ENCODE measurements at regions of chr5 and their contacts with region 1.

Region 1: GRCh38 chr5:95858661-95859326 is 36.3 kb upstream of the GLRX start:
- DNase-seq: peak; percentile 67
- ATAC-seq: peak; percentile 95
- H3K4me3 ChIP-seq: no peak overlapping the region; the same call in 1 of the 2 replicates
- H3K27ac ChIP-seq: no peak overlapping the region
- H3K4me1 ChIP-seq: peaks cover 21% of the 10 kb centered on the region
- H3K27me3 ChIP-seq: no peaks in the 10 kb centered on the region
- CTCF ChIP-seq: peak; percentile 96 to 99 (median 98)
- EP300 ChIP-seq: no peak
- POLR2A ChIP-seq: no peak
- RAD21 ChIP-seq: peak; percentile 99

Region 2: GRCh38 chr5:95883613-95884325 is 25.0 kb after region 1 on chr5:
- CTCF ChIA-PET with region 1: interaction called, 5 read pairs
- POLR2A ChIA-PET with region 1: interaction called, 3 read pairs
- RAD21 ChIA-PET with region 1: interaction called, 11 read pairs
- SMC1A ChIA-PET with region 1: interaction called, 7 read pairs
- in situ Hi-C with region 1: no loop called
- intact Hi-C with region 1: loop called (anchors 2 kb)
- DNase-seq: peak; percentile 48
- ATAC-seq: peak; percentile 75
- H3K4me3 ChIP-seq: 0 out of 2 replicates have a peak overlapping the region, but pooled peaks have one; percentile 13
- H3K27ac ChIP-seq: no peak overlapping the region
- H3K4me1 ChIP-seq: peaks cover 9% of the 10 kb centered on the region; the same call in 1 of the 2 replicates
- H3K27me3 ChIP-seq: no peaks in the 10 kb centered on the region; a peak in 1 of 4 replicates
- CTCF ChIP-seq: no peak
- EP300 ChIP-seq: no peak
- POLR2A ChIP-seq: no peak; the same call in 1 of the 2 replicates
- RAD21 ChIP-seq: no peak

Region 3: GRCh38 chr5:96079075-96079474 is 220.3 kb after region 1 on chr5:
- CTCF ChIA-PET with region 1: no interaction called
- POLR2A ChIA-PET with region 1: no interaction called
- RAD21 ChIA-PET with region 1: interaction called, 3 read pairs
- SMC1A ChIA-PET with region 1: no interaction called
- in situ Hi-C with region 1: no loop called
- intact Hi-C with region 1: loop called (anchors 5 kb)
- DNase-seq: no peak
- ATAC-seq: peak; percentile 53
- H3K4me3 ChIP-seq: no peak overlapping the region
- H3K27ac ChIP-seq: no peak overlapping the region
- H3K4me1 ChIP-seq: no peaks in the 10 kb centered on the region
- H3K27me3 ChIP-seq: no peaks in the 10 kb centered on the region
- CTCF ChIP-seq: no peak
- EP300 ChIP-seq: no peak
- POLR2A ChIP-seq: no peak
- RAD21 ChIP-seq: no peak

Region 4: GRCh38 chr5:96331210-96331609 is 472.4 kb after region 1 on chr5:
- CTCF ChIA-PET with region 1: interaction called, 360 read pairs
- POLR2A ChIA-PET with region 1: no interaction called
- RAD21 ChIA-PET with region 1: interaction called, 182 read pairs
- SMC1A ChIA-PET with region 1: interaction called, 289 read pairs
- in situ Hi-C with region 1: loop called (anchors 5 kb)
- intact Hi-C with region 1: loop called (anchors 1 kb)
- DNase-seq: no peak
- ATAC-seq: no peak
- H3K4me3 ChIP-seq: no peak overlapping the region
- H3K27ac ChIP-seq: no peak overlapping the region
- H3K4me1 ChIP-seq: peaks cover 11% of the 10 kb centered on the region; the same call in 1 of the 2 replicates
- H3K27me3 ChIP-seq: no peaks in the 10 kb centered on the region; a peak in 1 of 4 replicates
- CTCF ChIP-seq: no peak
- EP300 ChIP-seq: no peak
- POLR2A ChIP-seq: no peak
- RAD21 ChIP-seq: no peak

Region 5: GRCh38 chr5:96439477-96440184 is 580.8 kb after region 1 on chr5:
- CTCF ChIA-PET with region 1: interaction called, 8 read pairs
- POLR2A ChIA-PET with region 1: no interaction called
- RAD21 ChIA-PET with region 1: no interaction called
- SMC1A ChIA-PET with region 1: interaction called, 10 read pairs
- in situ Hi-C with region 1: loop called (anchors 5 kb)
- intact Hi-C with region 1: loop called (anchors 5 kb)
- DNase-seq: peak; percentile 56
- ATAC-seq: peak; percentile 96
- H3K4me3 ChIP-seq: peak overlapping the region; percentile 28; the same call in 1 of the 2 replicates
- H3K27ac ChIP-seq: peak overlapping the region; percentile 48
- H3K4me1 ChIP-seq: peaks cover 11% of the 10 kb centered on the region
- H3K27me3 ChIP-seq: no peaks in the 10 kb centered on the region
- CTCF ChIP-seq: peak; percentile 17 to 54 (median 33); a peak in 5 of 6 replicates
- EP300 ChIP-seq: peak in 1 of 2 experiments; percentile 52; a peak in 1 of 4 replicates
- POLR2A ChIP-seq: no peak
- RAD21 ChIP-seq: peak; percentile 49

Region 6: GRCh38 chr5:96601811-96602244 is 743.0 kb after region 1 on chr5:
- CTCF ChIA-PET with region 1: interaction called, 4 read pairs
- POLR2A ChIA-PET with region 1: no interaction called
- RAD21 ChIA-PET with region 1: interaction called, 4 read pairs
- SMC1A ChIA-PET with region 1: interaction called, 9 read pairs
- in situ Hi-C with region 1: loop called (anchors 5 kb)
- intact Hi-C with region 1: loop called (anchors 2 kb)
- DNase-seq: peak; percentile 16
- ATAC-seq: peak; percentile 96
- H3K4me3 ChIP-seq: no peak overlapping the region
- H3K27ac ChIP-seq: no peak overlapping the region
- H3K4me1 ChIP-seq: no peaks in the 10 kb centered on the region
- H3K27me3 ChIP-seq: no peaks in the 10 kb centered on the region
- CTCF ChIP-seq: peak; percentile 71 to 83 (median 77)
- EP300 ChIP-seq: no peak
- POLR2A ChIP-seq: no peak
- RAD21 ChIP-seq: peak; percentile 62

Measured in GM12878 (cell line).